Posterior vena cava (tissue), 2 donors: ENCODE measurements at regions of chr4 and their contacts with region 1.

Region 1: GRCh38 chr4:4256799-4257198 is 8.8 kb upstream of the TMEM128 start:
- DNase-seq: no peak

Region 2: DNA sequence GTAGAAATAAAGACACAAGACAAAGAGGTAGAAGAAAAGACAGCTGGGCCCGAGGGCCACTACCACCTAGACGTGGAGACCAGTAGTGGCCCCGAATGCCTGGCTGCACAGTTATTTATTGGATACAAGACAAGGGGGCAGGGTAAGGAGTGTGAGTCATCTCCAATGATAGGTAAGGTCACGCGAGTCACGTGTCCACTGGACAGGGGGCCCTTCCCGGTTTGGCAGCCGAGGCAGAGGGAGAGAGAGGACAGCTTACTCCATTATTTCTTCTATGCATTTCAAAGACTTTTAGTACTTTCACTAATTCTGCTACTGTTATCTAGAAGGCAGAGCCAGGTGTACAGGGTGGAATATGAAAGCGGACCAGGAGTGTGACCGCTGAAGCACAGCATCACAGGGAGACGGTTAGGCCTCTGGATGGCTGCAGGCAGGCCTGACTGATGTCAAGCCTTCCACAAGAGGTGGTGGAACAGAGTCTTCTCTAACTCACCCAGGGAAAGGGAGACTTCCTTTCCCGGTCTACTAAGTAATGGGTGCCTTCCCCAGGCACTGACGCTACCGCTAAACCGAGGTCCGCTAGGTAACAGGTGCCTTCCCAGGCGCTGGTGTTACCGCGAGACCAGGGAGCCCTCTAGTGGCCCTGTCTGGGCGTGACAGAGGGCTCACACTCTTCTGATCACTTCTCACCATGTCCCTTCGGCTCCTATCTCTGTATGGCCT is 78.2 kb after region 1 on chr4:
- intact Hi-C with region 1: loop called in 1 of 2 experiments (anchors 10 kb)
- DNase-seq: peak; percentile 87